ENCODE measurements at regions of chr16 and their contacts with region 1.

Region 1: GRCh38 chr16:3129137-3130131 is 5.4 kb upstream of the ZNF213 start:
- DNase-seq: peak; percentile 87 to 93 (median 90)
- H3K4me3 ChIP-seq: peak overlapping the region; percentile 61 to 85 (median 69)
- H3K27ac ChIP-seq: peak overlapping the region in 1 of 2 experiments; percentile 64
- H3K4me1 ChIP-seq: peaks cover 4 to 36% (median 28%) of the 10 kb centered on the region in 4 experiments
- H3K27me3 ChIP-seq: no peaks in the 10 kb centered on the region

Region 2: DNA sequence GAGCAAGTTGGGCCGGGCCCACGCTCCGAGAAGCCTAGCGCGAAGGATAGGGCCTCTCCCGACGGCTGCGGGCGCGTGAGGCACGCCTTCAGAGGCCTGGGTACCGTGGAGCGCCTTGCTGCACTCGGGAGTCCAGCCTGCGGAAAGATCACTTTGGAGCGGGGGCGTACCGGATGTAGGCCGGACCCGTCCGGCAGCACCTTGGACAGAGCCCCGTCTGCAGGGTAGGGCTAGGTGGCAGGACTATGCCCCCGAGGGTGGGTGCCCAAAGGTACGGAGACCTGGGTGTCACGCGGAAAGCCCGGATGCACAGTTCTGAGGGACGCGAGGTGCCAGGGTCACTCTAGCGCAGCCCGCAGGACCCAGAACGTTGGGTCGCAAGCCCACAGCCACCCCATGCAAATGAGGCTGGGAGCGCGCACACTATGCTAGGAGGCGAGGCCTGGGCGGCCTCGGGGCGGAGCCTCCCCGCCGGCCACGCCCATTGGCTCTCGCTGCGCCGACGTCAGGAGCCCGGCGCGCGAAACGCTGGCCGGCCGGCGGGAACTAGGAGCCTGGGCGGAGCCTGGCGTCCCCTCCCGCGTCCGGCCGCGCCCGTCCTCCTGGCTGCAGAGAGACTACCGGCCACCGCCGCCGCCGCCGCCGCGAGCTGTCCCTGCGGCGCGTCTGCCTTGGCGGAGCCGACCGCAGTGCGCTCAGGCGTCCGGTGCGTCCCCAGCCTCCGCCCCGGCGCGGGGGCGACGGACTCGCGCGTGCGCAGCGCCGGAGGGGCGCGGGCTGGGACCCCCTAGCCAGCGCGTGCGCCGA is 160.5 kb before region 1 on chr16 and contains the start of gene PAQR4:
- CTCF ChIA-PET with region 1: no interaction called
- POLR2A ChIA-PET with region 1: no interaction called
- DNase-seq: peak; percentile 68 to 81 (median 78)
- H3K4me3 ChIP-seq: peak within 1 kb of the TSS; percentile 71 to 87 (median 82)
- H3K27ac ChIP-seq: no peak within 1 kb of the TSS
- H3K4me1 ChIP-seq: peaks cover 0 to 60% (median 51%) of the 10 kb centered on the region in 4 experiments
- H3K27me3 ChIP-seq: peaks cover 0 to 47% (median 19%) of the 10 kb centered on the region in 5 experiments

Region 3: GRCh38 chr16:3023669-3024478 is 105.6 kb before region 1 on chr16 and contains the starts of genes HCFC1R1 and THOC6:
- CTCF ChIA-PET with region 1: interaction called, 87 read pairs
- POLR2A ChIA-PET with region 1: no interaction called
- DNase-seq: peak; percentile 98
- H3K4me3 ChIP-seq: peak within 1 kb of the TSS; percentile 16 to 82 (median 77)
- H3K27ac ChIP-seq: peak within 1 kb of the TSS; percentile 81 to 90
- H3K4me1 ChIP-seq: peaks cover 0 to 61% (median 57%) of the 10 kb centered on the region in 4 experiments
- H3K27me3 ChIP-seq: peaks cover 0 to 6% (median 4%) of the 10 kb centered on the region in 5 experiments

Region 4: DNA sequence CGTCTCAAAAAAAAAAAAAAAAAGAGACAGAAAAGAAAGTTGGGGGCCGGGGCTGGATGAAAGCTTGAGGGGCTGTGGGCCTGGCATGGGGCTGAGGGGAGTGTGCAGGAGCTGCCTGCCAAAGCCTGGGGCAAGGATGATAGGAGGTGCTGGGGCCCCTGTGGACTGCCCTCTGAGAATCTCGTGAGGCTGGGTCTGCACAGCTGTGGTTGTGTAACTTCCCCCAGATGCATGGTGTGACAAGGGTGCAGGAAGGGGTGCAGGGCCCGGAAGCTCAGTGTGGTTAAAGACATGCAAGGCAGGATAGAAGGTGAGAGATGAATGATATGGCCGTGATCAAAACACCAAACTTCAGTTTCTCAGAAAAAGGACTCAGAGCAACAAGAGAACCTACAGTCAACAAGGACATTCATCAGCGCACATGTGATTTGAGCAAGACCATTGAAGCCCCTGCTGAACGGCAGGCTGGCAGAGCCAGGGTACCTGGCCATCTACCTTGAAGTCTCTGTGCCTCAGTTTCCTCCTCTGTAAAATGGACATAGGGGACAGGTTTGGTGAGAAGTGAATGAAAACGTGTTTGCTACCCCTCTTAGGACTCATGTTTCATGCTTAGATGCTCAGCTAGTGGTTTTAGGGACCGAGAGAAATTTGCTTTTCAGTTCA is 54.4 kb before region 1 on chr16:
- CTCF ChIA-PET with region 1: interaction called, 11 read pairs
- POLR2A ChIA-PET with region 1: interaction called, 3 read pairs
- DNase-seq: peak; percentile 82 to 98 (median 94)
- H3K4me3 ChIP-seq: peak overlapping the region in 5 of 7 experiments; percentile 9 to 53 (median 15)
- H3K27ac ChIP-seq: peak overlapping the region; percentile 56 to 64
- H3K4me1 ChIP-seq: peaks cover 0 to 63% (median 43%) of the 10 kb centered on the region in 4 experiments
- H3K27me3 ChIP-seq: no peaks in the 10 kb centered on the region

Region 5: DNA sequence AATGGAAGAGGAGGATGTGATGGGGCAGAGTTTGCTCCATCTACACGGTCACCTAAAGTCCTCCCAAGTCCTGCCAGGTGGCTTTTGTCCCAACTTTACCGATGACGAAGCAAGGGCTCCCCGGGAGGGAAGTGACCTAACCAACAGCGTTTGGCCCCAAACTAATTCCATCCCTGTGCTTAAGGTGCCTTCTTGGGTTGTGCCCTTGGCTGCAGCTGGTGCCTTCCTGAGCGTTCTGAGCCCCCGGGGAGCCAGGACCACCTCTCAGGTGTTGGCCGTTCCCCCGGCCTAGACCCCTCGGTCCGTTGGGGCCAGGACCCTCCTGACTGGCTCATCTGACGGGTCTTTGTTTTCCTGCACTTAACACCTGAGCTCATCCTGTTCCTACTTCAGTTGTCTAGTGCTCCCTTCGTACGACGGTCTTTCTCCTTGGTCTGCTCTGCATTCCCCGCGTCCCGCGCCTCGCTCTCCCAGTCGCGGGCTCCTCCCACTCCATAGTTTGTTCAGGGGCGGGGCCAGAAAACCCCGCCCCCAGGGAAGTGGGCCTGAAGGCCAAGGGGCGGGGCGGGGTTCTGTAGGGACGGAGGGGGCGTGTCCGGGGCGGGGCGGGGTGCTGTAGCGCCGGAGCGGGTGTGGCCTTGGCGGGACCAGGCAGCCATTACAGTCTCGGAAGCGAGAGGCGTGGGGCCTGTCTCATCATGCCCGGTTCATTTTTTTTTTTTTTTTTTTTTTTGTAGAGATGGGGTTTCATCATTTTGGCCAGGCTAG is 29.5 kb before region 1 on chr16:
- CTCF ChIA-PET with region 1: interaction called, 103 read pairs
- POLR2A ChIA-PET with region 1: no interaction called
- DNase-seq: peak; percentile 90 to 93 (median 92)
- H3K4me3 ChIP-seq: peak overlapping the region in 6 of 7 experiments; percentile 9 to 59 (median 41)
- H3K27ac ChIP-seq: no peak overlapping the region
- H3K4me1 ChIP-seq: peaks cover 10 to 41% (median 35%) of the 10 kb centered on the region in 4 experiments
- H3K27me3 ChIP-seq: no peaks in the 10 kb centered on the region

Region 6: GRCh38 chr16:3118204-3118806 is 11.1 kb before region 1 on chr16:
- CTCF ChIA-PET with region 1: interaction called, 31 read pairs
- POLR2A ChIA-PET with region 1: no interaction called
- DNase-seq: no peak
- H3K4me3 ChIP-seq: no peak overlapping the region
- H3K27ac ChIP-seq: no peak overlapping the region
- H3K4me1 ChIP-seq: peaks cover 0 to 5% (median 3%) of the 10 kb centered on the region in 4 experiments
- H3K27me3 ChIP-seq: peaks cover 0 to 2% (median 0%) of the 10 kb centered on the region in 5 experiments

Region 7: GRCh38 chr16:3173892-3174617 is 44.6 kb after region 1 on chr16:
- CTCF ChIA-PET with region 1: interaction called, 16 read pairs
- POLR2A ChIA-PET with region 1: no interaction called
- DNase-seq: peak in 2 of 3 donors; percentile 56 to 68
- H3K4me3 ChIP-seq: peak overlapping the region in 3 of 7 experiments; percentile 6 to 47 (median 9)
- H3K27ac ChIP-seq: no peak overlapping the region
- H3K4me1 ChIP-seq: peaks cover 0 to 37% (median 33%) of the 10 kb centered on the region in 4 experiments
- H3K27me3 ChIP-seq: peaks cover 5 to 98% (median 51%) of the 10 kb centered on the region in 5 experiments